ENCODE measurements at regions of chr1 and their contacts with region 1.

Region 1: GRCh38 chr1:182446033-182446669 is 3.8 kb upstream of the RGSL1 start:
- DNase-seq: peak; percentile 68
- ATAC-seq: peak; percentile 63
- H3K4me3 ChIP-seq: no peak overlapping the region
- H3K4me3 Mint-ChIP-seq: no peak overlapping the region
- H3K27ac ChIP-seq: no peak overlapping the region
- H3K27ac Mint-ChIP-seq: no peak overlapping the region
- H3K4me1 ChIP-seq: peaks cover 0 to 3% of the 10 kb centered on the region in 2 donors
- H3K4me1 Mint-ChIP-seq: peaks cover 2% of the 10 kb centered on the region
- H3K27me3 ChIP-seq: peaks cover 0 to 3% (median 0%) of the 10 kb centered on the region in 4 experiments
- H3K27me3 Mint-ChIP-seq: no peaks in the 10 kb centered on the region
- CTCF ChIP-seq: peak; percentile 92

Region 2: GRCh38 chr1:182595641-182596240 is 149.6 kb after region 1 on chr1:
- CTCF ChIA-PET with region 1: interaction called, 19 read pairs
- POLR2A ChIA-PET with region 1: no interaction called
- intact Hi-C with region 1: loop called (anchors 1 kb)
- DNase-seq: peak; percentile 67
- ATAC-seq: peak; percentile 86
- H3K4me3 ChIP-seq: no peak overlapping the region
- H3K4me3 Mint-ChIP-seq: no peak overlapping the region
- H3K27ac ChIP-seq: no peak overlapping the region
- H3K27ac Mint-ChIP-seq: no peak overlapping the region
- H3K4me1 ChIP-seq: peaks cover 0 to 3% of the 10 kb centered on the region in 2 donors
- H3K4me1 Mint-ChIP-seq: peaks cover 4% of the 10 kb centered on the region
- H3K27me3 ChIP-seq: no peaks in the 10 kb centered on the region
- H3K27me3 Mint-ChIP-seq: no peaks in the 10 kb centered on the region
- CTCF ChIP-seq: peak; percentile 92